ENCODE measurements at regions of chr12 and their contacts with region 1.

Region 1: DNA sequence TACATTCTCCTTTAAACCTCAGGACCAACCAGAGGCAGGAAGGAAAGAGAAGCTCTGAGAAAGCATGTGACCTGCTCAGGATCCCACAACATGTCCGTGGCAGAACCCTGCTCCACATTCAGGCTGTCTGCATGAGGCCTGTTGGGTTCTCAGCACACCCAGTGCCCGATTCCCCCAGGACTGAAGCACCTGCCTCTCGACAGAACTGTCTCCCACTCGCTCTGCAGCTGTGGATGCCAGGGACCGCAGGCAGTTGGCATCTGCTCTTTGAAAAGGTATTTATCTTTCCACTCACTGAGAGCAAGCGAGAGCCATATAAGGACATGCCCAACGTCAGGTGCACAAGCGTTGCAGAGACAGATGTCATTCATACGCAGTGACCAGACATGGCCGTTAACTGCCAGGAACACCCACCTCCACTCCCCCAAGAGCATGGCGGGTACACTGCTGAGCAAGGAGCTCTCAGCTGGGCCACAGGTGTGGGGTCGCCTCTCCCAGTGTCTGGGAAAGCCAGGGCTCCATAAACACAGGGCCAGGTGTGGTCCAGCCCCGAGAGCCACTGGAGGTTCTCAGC is 18.9 kb downstream of the PITPNM2 start:
- DNase-seq: no peak
- ATAC-seq: peak; percentile 21 to 84 (median 68)
- H3K4me3 ChIP-seq: no peak overlapping the region
- H3K27ac ChIP-seq: peak overlapping the region in 9 of 10 donors; percentile 49 to 81 (median 65)
- H3K4me1 ChIP-seq: peaks cover 0 to 36% (median 24%) of the 10 kb centered on the region in 9 donors
- H3K27me3 ChIP-seq: no peaks in the 10 kb centered on the region
- CTCF ChIP-seq: no peak

Region 2: DNA sequence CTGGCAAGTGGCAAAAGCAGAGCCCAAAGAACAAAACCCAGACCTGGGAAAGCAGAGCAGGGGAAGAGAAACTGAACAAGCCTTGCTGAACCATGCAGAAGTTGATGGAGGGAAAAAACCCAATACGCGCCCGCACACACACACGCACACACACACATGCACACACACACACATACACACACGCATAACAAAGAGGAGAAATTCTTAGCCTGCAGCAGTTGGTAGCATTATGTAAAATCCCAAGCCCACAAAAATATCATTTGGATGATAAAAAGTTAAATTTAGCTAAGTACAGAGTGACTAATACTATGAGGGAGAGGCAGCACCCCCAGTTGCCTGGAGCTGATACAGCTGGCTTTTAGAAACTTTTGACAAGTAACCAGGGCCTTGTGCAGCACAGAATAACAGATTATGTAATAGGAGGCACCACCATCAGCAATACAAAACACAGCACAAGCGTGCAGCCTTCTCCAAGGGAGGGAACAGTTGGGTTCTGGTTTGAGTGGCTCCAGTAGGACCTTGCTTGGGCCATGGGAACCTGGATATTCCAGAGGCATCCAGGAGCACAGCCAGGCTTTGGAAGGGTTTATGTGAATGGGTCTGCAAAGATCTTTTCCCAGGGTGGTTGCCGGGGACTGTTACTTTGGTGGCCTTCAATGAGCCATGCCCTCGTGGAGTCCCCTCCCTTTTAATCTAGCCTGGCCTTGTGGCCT is 16.4 kb before region 1 on chr12:
- intact Hi-C with region 1: loop called in 1 of 10 experiments (anchors 1 kb)
- DNase-seq: peak in 1 of 2 donors; percentile 78
- ATAC-seq: peak; percentile 85 to 95 (median 92)
- H3K4me3 ChIP-seq: no peak overlapping the region
- H3K27ac ChIP-seq: peak overlapping the region; percentile 59 to 85 (median 68)
- H3K4me1 ChIP-seq: peaks cover 24 to 84% (median 65%) of the 10 kb centered on the region in 9 donors
- H3K27me3 ChIP-seq: no peaks in the 10 kb centered on the region
- CTCF ChIP-seq: no peak